ENCODE measurements at regions of chr2 and their contacts with region 1.

Region 1: GRCh38 chr2:37376421-37377186 is 32.2 kb downstream of the QPCT start:
- DNase-seq: no peak
- ATAC-seq: peak; percentile 71
- H3K4me3 Mint-ChIP-seq: peak overlapping the region; percentile 80
- H3K27ac Mint-ChIP-seq: peak overlapping the region; percentile 83
- H3K4me1 Mint-ChIP-seq: peaks cover 46% of the 10 kb centered on the region
- H3K27me3 Mint-ChIP-seq: no peaks in the 10 kb centered on the region
- CTCF ChIP-seq: no peak

Region 2: DNA sequence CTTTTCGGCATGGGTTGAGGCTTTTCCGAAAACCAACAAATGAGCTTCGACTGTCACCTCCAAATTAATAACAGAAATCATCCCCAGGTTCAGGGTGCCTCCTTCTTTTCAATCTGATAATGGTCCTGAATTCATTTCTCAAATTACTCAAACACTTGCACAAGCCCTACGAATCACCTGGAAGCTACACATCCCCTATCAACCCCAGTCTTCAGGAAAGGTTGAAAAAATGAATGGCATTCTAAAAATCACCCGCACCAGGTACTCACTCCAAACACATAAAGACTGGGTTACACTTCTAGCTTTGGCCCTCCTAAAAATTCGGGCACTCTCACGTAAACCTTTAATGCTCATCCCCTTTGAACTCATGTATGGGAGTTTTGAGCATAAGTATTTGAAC is 243.7 kb before region 1 on chr2:
- CTCF ChIA-PET with region 1: no interaction called
- POLR2A ChIA-PET with region 1: no interaction called
- intact Hi-C with region 1: no loop called
- DNase-seq: no peak
- ATAC-seq: no peak
- H3K4me3 Mint-ChIP-seq: no peak overlapping the region
- H3K27ac Mint-ChIP-seq: no peak overlapping the region
- H3K4me1 Mint-ChIP-seq: no peaks in the 10 kb centered on the region
- H3K27me3 Mint-ChIP-seq: no peaks in the 10 kb centered on the region
- CTCF ChIP-seq: no peak

Region 3: DNA sequence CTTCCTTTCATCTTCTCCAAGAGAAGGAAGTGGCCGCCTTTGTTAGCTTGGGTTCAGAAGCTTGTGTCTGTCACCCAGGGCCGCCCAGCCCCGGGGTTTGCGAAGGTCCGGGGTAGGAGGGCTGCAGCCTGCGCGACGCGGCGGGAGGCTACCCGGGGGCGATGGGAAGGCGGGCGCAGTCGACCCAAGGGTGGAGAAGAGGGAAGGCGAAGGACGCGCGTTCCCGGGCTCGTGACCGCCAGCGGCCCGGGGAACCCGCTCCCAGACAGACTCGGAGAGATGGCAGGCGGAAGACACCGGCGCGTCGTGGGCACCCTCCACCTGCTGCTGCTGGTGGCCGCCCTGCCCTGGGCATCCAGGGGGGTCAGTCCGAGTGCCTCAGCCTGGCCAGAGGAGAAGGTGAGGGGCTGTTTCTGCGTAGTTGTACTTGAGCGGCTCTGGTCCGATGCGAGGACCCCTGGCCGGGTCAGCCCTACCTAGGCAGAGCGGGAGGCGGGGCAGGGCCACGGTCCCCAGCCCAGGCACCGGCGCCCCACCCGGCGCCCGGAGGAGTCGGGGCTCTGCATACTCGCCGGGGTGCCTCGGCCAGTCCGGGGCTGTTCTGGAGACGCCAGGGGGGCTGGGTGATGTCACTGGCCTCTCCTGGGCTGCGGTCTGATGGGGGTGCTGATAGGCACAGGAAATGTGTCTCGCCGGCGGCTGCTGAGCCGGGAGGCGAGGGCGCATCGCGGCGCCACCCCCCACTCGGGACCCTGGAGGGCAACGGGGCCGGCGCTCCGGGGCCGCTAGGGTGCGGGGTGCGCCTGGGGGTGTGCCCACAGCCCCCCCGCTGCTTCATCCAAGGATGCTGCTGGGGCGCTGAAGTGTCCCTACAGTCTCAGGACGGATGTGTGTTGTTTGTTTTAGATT is 31.9 kb before region 1 on chr2 and contains the start of gene QPCT:
- CTCF ChIA-PET with region 1: interaction called, 8 read pairs
- POLR2A ChIA-PET with region 1: interaction called, 23 read pairs
- intact Hi-C with region 1: loop called (anchors 5 kb)
- DNase-seq: peak; percentile 53
- ATAC-seq: peak; percentile 75
- H3K4me3 Mint-ChIP-seq: peak within 1 kb of the TSS; percentile 85
- H3K27ac Mint-ChIP-seq: peak within 1 kb of the TSS; percentile 30
- H3K4me1 Mint-ChIP-seq: peaks cover 21% of the 10 kb centered on the region
- H3K27me3 Mint-ChIP-seq: no peaks in the 10 kb centered on the region
- CTCF ChIP-seq: no peak
- total RNA-seq, gene QPCT: 1.9 and 2.1 TPM in 2 replicates

Region 4: GRCh38 chr2:37350034-37350433 is 26.6 kb before region 1 on chr2:
- CTCF ChIA-PET with region 1: interaction called, 8 read pairs
- POLR2A ChIA-PET with region 1: interaction called, 23 read pairs
- intact Hi-C with region 1: loop called (anchors 1 kb)
- DNase-seq: peak; percentile 54
- ATAC-seq: peak; percentile 88
- H3K4me3 Mint-ChIP-seq: peak overlapping the region; percentile 46
- H3K27ac Mint-ChIP-seq: peak overlapping the region; percentile 66
- H3K4me1 Mint-ChIP-seq: peaks cover 29% of the 10 kb centered on the region
- H3K27me3 Mint-ChIP-seq: peaks cover 1% of the 10 kb centered on the region
- CTCF ChIP-seq: no peak

Region 5: GRCh38 chr2:38554973-38555595 is 1178.5 kb after region 1 on chr2:
- CTCF ChIA-PET with region 1: no interaction called
- POLR2A ChIA-PET with region 1: no interaction called
- intact Hi-C with region 1: no loop called
- DNase-seq: no peak
- ATAC-seq: no peak
- H3K4me3 Mint-ChIP-seq: no peak overlapping the region
- H3K27ac Mint-ChIP-seq: no peak overlapping the region
- H3K4me1 Mint-ChIP-seq: no peaks in the 10 kb centered on the region
- H3K27me3 Mint-ChIP-seq: peaks cover 13% of the 10 kb centered on the region
- CTCF ChIP-seq: no peak

Measured in activated B cell treated with CpG ODN at 0.5 μM for 24 hours (primary cell).